Prostate gland (tissue), 2 donors: ENCODE measurements at regions of chr6 and their contacts with region 1.

Region 1: GRCh38 chr6:37691904-37692806 is 5.5 kb downstream of the MDGA1 start:
- DNase-seq: peak; percentile 59
- H3K4me3 ChIP-seq: no peak overlapping the region
- H3K27ac ChIP-seq: no peak overlapping the region
- H3K4me1 ChIP-seq: peaks cover 4% of the 10 kb centered on the region
- H3K27me3 ChIP-seq: no peaks in the 10 kb centered on the region
- CTCF ChIP-seq: peak; percentile 87 to 97 (median 90)
- POLR2A ChIP-seq: no peak

Region 2: GRCh38 chr6:36605560-36606391 is 1086.4 kb before region 1 on chr6:
- intact Hi-C with region 1: no loop called
- DNase-seq: no peak
- H3K4me3 ChIP-seq: no peak overlapping the region
- H3K27ac ChIP-seq: no peak overlapping the region
- H3K4me1 ChIP-seq: peaks cover 4% of the 10 kb centered on the region
- H3K27me3 ChIP-seq: no peaks in the 10 kb centered on the region
- CTCF ChIP-seq: peak in 1 of 4 experiments; percentile 12
- POLR2A ChIP-seq: no peak

Region 3: DNA sequence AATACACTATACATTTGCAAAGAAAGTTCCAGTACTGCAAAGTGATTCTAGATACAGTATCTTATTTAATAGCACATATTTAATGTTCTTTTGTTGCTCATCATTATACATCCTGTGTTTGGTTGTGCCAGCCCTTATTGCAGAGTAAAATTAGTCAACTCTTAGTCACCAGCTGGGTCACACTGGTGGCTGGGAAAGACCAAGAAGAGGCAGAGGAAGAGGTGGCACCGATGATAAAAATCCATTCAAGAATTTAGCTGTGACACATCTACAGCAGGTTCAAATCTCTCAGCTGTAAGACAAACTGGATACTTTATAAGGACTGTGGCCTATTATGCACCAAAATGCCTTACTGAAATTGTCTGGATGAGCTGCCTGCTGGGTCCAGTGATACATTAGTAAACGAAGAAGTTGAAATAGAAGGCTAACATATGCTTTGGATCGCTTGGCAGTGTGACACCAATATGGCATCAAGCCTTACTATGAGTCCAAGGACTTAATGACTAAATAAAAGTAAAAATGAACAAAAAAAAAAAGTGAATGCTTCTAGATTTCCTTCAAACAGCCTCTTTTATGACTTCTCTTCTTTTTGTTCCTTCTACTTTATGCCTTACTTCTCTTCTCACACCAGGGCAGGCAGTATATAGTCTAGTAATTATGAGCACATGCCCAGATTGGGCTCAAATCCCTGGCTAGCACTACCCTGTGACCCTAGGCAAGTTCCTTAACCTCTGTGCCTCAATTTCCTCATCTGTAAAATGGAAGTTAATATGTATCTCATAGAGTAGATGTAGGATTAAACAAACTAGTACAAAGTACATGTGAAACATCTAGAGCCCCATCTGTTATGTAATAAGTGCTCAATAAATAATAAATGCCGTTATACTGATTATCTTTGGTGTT is 367.8 kb before region 1 on chr6:
- intact Hi-C with region 1: loop called (anchors 5 kb)
- DNase-seq: no peak
- H3K4me3 ChIP-seq: no peak overlapping the region
- H3K27ac ChIP-seq: no peak overlapping the region
- H3K4me1 ChIP-seq: peaks cover 5% of the 10 kb centered on the region
- H3K27me3 ChIP-seq: no peaks in the 10 kb centered on the region
- CTCF ChIP-seq: no peak
- POLR2A ChIP-seq: no peak

Region 4: DNA sequence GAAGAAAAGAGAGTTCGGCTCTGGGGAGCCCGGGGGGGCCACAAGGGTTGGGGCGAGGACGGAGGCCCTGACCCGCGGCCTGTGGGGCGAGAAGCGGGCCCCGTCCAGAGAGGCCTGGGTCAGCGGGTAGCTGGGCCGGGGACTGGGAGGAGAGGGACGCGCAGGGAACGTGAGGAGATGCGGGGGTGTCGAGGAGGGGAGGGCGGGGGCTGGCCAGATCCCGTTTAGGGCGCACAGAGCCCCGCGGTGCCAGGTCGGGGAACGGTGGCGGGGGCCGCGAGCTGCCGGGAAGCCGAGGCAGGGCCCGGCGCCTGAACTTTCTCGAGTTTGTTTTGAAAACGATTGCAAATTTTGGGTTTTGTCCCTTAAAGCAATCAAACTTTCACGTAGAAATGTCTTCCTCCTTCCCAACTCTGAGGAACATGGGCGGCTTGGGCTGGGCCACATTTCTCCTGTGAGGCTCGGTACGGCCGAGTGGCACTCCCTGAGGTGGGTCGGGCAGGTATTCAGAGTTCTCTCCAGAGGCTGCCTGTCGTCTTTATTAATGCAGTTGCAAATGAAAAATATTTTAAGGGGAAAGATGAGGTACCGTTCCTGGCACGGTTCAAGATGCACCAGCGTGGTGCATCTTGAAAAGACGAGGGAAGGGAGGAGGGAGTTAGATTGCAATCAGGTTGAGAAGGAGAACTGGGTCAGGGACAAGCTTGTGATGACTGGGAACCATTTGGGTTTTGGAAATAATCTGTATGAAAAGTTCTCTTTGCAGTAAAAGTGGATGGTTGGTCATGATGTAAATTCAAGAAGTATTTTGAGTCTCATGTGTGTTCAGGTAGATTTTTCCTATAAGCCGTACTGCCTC is 337.4 kb before region 1 on chr6:
- intact Hi-C with region 1: no loop called
- DNase-seq: peak; percentile 7
- H3K4me3 ChIP-seq: peak overlapping the region; percentile 73 to 86
- H3K27ac ChIP-seq: peak overlapping the region; percentile 57 to 65
- H3K4me1 ChIP-seq: no peaks in the 10 kb centered on the region
- H3K27me3 ChIP-seq: no peaks in the 10 kb centered on the region
- CTCF ChIP-seq: no peak
- POLR2A ChIP-seq: no peak

Region 5: DNA sequence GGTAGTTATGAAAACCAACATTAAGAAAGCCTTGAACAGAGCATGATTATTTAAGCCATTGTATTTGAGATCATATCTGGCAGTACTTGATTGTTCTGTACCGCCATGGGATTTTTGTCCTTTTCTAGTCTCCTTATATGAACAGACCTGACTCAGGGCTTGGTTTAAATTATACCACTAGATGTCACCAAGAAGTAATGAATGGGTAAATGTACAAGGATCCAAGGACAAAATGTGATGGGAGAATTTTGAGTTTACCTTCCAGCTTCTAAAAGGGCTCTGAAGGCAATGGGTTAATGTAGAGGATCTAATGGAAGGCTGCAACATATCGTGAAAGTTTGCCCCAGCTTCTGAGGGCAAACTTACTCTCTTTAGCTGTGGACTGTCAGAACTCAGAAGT is 326.4 kb before region 1 on chr6:
- intact Hi-C with region 1: loop called (anchors 10 kb)
- DNase-seq: no peak
- H3K4me3 ChIP-seq: no peak overlapping the region
- H3K27ac ChIP-seq: no peak overlapping the region
- H3K4me1 ChIP-seq: no peaks in the 10 kb centered on the region
- H3K27me3 ChIP-seq: no peaks in the 10 kb centered on the region
- CTCF ChIP-seq: peak in 1 of 4 experiments; percentile 25
- POLR2A ChIP-seq: no peak

Region 6: DNA sequence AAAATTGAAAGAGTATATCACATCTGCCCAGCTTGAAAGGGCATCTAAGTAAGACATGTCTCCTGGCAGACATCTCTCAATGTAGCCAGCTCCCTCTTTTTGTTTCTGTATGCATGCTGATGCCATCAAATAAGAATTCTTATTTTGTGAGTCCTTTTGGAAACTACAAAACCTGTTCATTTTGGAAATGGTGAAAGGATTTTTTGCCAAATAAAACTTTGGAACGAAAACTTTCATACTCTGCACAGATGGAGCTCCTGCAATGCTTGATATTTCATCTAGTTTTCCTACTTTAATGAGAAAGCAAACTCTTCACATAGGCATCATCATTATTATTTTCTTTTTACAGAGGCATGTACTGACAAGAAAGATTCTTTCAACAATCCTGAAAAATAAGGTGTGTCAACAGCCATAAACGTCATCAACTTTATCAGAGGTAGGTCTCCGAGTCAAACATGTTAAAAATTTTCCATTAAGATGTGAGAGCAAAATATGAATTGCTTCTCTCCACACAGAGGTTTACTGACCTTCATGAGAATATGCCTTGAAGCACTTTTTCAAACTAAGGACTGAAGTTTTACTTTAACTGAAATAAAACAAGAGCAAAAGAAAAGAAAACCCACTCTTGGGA is 285.3 kb before region 1 on chr6:
- intact Hi-C with region 1: no loop called
- DNase-seq: no peak
- H3K4me3 ChIP-seq: no peak overlapping the region
- H3K27ac ChIP-seq: no peak overlapping the region
- H3K4me1 ChIP-seq: no peaks in the 10 kb centered on the region
- H3K27me3 ChIP-seq: no peaks in the 10 kb centered on the region
- CTCF ChIP-seq: no peak
- POLR2A ChIP-seq: no peak

Region 7: GRCh38 chr6:37483917-37484785 is 208.0 kb before region 1 on chr6:
- intact Hi-C with region 1: loop called (anchors 5 kb)
- DNase-seq: peak; percentile 49
- H3K4me3 ChIP-seq: no peak overlapping the region
- H3K27ac ChIP-seq: no peak overlapping the region
- H3K4me1 ChIP-seq: peaks cover 3% of the 10 kb centered on the region
- H3K27me3 ChIP-seq: no peaks in the 10 kb centered on the region
- CTCF ChIP-seq: peak; percentile 80 to 85 (median 83)
- POLR2A ChIP-seq: no peak

Region 8: DNA sequence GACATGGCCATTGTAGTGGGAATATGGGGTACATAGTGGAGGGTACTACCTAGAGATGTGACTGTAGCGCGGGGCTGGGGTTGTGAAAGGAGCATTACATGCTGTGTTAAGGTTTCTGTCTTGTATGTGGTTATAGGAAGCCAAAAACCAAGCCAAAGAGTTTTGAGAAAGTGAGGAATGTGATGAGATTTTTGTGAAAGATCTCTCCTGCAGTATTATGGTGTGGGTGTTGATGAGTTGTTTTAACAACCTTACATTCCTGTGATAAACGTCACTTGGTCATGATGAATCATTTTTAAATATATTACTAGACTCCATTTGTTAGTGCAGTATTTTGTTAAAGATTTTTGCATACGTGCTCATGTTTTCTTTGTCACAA is 176.3 kb after region 1 on chr6:
- intact Hi-C with region 1: no loop called
- DNase-seq: no peak
- H3K4me3 ChIP-seq: no peak overlapping the region
- H3K27ac ChIP-seq: no peak overlapping the region
- H3K4me1 ChIP-seq: no peaks in the 10 kb centered on the region
- H3K27me3 ChIP-seq: no peaks in the 10 kb centered on the region
- CTCF ChIP-seq: no peak
- POLR2A ChIP-seq: no peak

Region 9: DNA sequence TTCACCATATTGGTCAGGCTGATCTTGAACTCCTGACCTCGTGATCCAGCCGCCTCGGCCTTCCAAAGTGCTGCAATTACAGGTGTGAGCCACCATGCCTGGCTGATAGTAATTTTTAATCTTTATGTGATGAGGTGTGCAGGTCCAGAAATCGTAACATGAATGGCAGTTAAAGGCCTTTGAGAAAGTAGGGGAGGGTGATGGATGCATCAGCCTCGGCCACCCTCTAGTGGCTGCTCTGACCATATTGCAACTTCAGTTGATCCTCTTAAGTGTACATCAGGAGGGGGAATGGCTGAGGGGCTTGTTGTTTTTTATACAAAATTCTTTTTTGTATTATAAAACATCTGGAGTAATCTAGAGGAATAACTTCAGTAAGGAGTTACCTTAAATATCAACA is 320.4 kb after region 1 on chr6:
- intact Hi-C with region 1: loop called (anchors 10 kb)
- DNase-seq: no peak
- H3K4me3 ChIP-seq: no peak overlapping the region
- H3K27ac ChIP-seq: no peak overlapping the region
- H3K4me1 ChIP-seq: no peaks in the 10 kb centered on the region
- H3K27me3 ChIP-seq: no peaks in the 10 kb centered on the region
- CTCF ChIP-seq: peak in 3 of 4 experiments; percentile 20 to 51 (median 32)
- POLR2A ChIP-seq: no peak